Motor neuron (in vitro differentiated cells): ENCODE measurements at regions of chr10 and their contacts with region 1.

Region 1: DNA sequence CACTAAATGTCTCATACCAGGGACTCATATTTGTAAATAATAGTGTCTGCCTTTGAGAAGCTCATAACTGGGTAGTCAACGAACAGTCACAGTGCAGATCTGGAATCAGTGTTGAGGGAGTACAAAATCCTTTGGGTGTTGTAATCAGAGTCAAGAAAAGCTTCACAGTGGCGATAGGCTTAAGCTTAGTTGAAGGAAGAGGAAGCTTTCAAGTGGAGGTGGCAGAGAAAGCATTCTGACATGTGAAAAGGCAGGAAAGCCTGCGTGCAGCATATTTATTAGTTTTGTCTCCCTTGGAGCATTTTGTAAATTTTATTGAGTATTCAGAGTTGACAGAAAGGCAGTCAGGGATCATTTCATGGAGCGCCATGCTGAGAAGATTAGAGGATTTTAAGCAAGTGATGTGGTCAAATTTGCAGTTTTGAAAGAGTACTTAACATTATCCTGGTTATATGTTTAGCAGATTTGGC is 104.9 kb downstream of the ADK start:
- ATAC-seq: no peak
- H3K4me3 ChIP-seq: no peak overlapping the region
- H3K27ac ChIP-seq: no peak overlapping the region
- H3K4me1 ChIP-seq: no peaks in the 10 kb centered on the region

Region 2: GRCh38 chr10:74826142-74827044 is 570.5 kb after region 1 on chr10 and contains the start of gene KAT6B:
- in situ Hi-C with region 1: loop called in 2 of 9 experiments (anchors 25 kb)
- ATAC-seq: peak; percentile 86 to 90 (median 86)
- H3K4me3 ChIP-seq: peak within 1 kb of the TSS; percentile 72 to 91 (median 81)
- H3K27ac ChIP-seq: peak within 1 kb of the TSS; percentile 99 to 100
- H3K4me1 ChIP-seq: peaks cover 11 to 12% of the 10 kb centered on the region in 2 donors
- total RNA-seq, gene KAT6B: 13.2 to 52.3 (median 20.8) TPM

Region 3: DNA sequence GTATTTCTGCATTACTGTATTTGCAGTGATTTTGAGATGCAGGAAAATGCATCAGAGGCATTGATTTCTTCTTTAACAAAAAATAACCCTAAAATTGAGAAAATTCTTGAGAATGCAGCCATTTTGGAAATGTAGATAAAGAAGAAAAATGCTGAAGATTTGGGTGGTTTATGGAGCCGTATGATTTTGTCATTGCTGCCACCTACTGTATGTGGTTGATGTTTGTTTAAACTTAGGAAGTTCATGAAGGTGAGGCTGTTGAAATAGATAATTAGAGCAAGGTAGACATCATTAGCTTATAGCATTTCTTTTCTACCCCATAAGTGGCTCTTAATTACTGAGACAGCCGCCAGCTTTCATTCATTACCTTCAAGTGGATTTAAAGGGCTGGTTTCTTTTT is 763.4 kb after region 1 on chr10:
- in situ Hi-C with region 1: loop called in 2 of 9 experiments (anchors 10 to 25 kb)
- ATAC-seq: peak in 1 of 8 experiments; percentile 47
- H3K4me3 ChIP-seq: no peak overlapping the region
- H3K27ac ChIP-seq: no peak overlapping the region
- H3K4me1 ChIP-seq: peaks cover 29 to 38% of the 10 kb centered on the region in 2 donors